Esophagus muscularis mucosa (tissue), 4 donors: ENCODE measurements at regions of chr3 and their contacts with region 1.

Region 1: GRCh38 chr3:72938471-72939265 is 50.8 kb downstream of the GXYLT2 start:
- DNase-seq: peak; percentile 92
- H3K4me3 ChIP-seq: no peak overlapping the region
- H3K27ac ChIP-seq: peak overlapping the region; percentile 16 to 54 (median 34)
- H3K4me1 ChIP-seq: peaks cover 0 to 15% (median 8%) of the 10 kb centered on the region in 4 donors
- H3K27me3 ChIP-seq: no peaks in the 10 kb centered on the region
- CTCF ChIP-seq: peak; percentile 61 to 67 (median 62)
- EP300 ChIP-seq: no peak
- POLR2A ChIP-seq: no peak

Region 2: DNA sequence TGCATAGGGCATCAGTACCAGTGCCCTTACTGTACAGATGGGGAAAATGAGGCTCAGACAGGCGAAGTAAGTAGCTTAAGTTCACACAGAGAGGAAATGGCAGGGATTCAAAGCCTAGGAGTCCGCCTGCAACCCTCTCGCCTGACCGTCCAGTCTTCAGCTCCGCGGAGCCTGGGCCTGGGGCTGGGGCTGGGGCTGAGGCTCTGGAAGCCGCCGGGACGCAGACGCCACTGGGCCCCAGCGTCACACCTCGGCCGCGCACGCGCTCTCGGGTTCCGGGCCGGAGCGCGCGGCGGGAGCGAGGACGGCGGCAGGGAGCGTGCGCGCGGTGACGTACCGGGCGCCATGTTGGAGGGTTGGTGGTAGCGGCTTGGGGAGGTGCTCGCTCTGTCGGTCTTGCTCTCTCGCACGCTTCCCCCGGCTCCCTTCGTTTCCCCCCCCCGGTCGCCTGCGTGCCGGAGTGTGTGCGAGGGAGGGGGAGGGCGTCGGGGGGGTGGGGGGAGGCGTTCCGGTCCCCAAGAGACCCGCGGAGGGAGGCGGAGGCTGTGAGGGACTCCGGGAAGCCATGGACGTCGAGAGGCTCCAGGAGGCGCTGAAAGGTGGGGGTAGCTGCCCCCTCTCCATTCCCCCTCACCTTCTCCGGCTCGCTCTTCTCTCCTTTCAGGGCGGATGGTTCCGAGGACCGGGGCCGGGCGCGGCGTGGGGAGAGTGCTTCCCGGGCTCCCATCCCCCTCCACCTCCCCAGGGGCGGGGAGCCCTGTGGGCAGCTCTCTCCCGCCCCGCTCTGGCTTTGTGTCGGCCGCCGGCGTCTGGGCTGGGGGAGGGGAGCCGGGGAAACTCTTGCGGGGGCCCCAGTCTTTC is 58.0 kb after region 1 on chr3 and contains the start of gene PPP4R2:
- intact Hi-C with region 1: loop called (anchors 5 kb)
- DNase-seq: peak; percentile 95
- H3K4me3 ChIP-seq: peak within 1 kb of the TSS; percentile 74 to 94 (median 91)
- H3K27ac ChIP-seq: peak within 1 kb of the TSS; percentile 97 to 99 (median 98)
- H3K4me1 ChIP-seq: peaks cover 39 to 47% (median 45%) of the 10 kb centered on the region in 4 donors
- H3K27me3 ChIP-seq: no peaks in the 10 kb centered on the region
- CTCF ChIP-seq: peak in 1 of 3 experiments; percentile 4
- EP300 ChIP-seq: no peak
- POLR2A ChIP-seq: peak; percentile 93
- total RNA-seq, gene PPP4R2: 24.6 to 60.6 (median 33.9) TPM

Region 3: GRCh38 chr3:73056014-73056844 is 117.6 kb after region 1 on chr3:
- intact Hi-C with region 1: loop called (anchors 2 kb)
- DNase-seq: no peak
- H3K4me3 ChIP-seq: no peak overlapping the region
- H3K27ac ChIP-seq: no peak overlapping the region
- H3K4me1 ChIP-seq: peaks cover 10 to 36% (median 23%) of the 10 kb centered on the region in 4 donors
- H3K27me3 ChIP-seq: no peaks in the 10 kb centered on the region
- CTCF ChIP-seq: peak; percentile 48 to 64 (median 52)
- EP300 ChIP-seq: no peak
- POLR2A ChIP-seq: no peak

Region 4: GRCh38 chr3:73086071-73086494 is 147.4 kb after region 1 on chr3:
- intact Hi-C with region 1: loop called (anchors 5 kb)
- DNase-seq: no peak
- H3K4me3 ChIP-seq: peak overlapping the region in 1 of 4 donors; percentile 19
- H3K27ac ChIP-seq: no peak overlapping the region
- H3K4me1 ChIP-seq: peaks cover 0 to 8% (median 4%) of the 10 kb centered on the region in 4 donors
- H3K27me3 ChIP-seq: no peaks in the 10 kb centered on the region
- CTCF ChIP-seq: peak; percentile 75 to 82 (median 77)
- EP300 ChIP-seq: no peak
- POLR2A ChIP-seq: no peak